CD8-positive, alpha-beta T cell (primary cell): ENCODE measurements at regions of chr17 and their contacts with region 1.

Region 1: GRCh38 chr17:43483674-43484372 is at the start of gene DHX8:
- DNase-seq: peak; percentile 97 to 100 (median 99)
- ATAC-seq: peak; percentile 98
- H3K4me3 ChIP-seq: peak within 1 kb of the TSS; percentile 94 to 99
- H3K4me3 Mint-ChIP-seq: peak within 1 kb of the TSS; percentile 100
- H3K27ac ChIP-seq: peak within 1 kb of the TSS; percentile 87 to 91
- H3K27ac Mint-ChIP-seq: peak within 1 kb of the TSS; percentile 99
- H3K4me1 ChIP-seq: peaks cover 27% of the 10 kb centered on the region
- H3K4me1 Mint-ChIP-seq: peaks cover 37% of the 10 kb centered on the region
- H3K27me3 ChIP-seq: no peaks in the 10 kb centered on the region
- H3K27me3 Mint-ChIP-seq: no peaks in the 10 kb centered on the region
- CTCF ChIP-seq: peak; percentile 100
- total RNA-seq, gene DHX8: 125 to 130 TPM

Region 2: GRCh38 chr17:42819944-42820535 is 663.8 kb before region 1 on chr17:
- CTCF ChIA-PET with region 1: no interaction called
- POLR2A ChIA-PET with region 1: no interaction called
- intact Hi-C with region 1: loop called in 1 of 2 experiments (anchors 1 kb)
- DNase-seq: peak; percentile 26 to 74 (median 63)
- ATAC-seq: peak; percentile 24
- H3K4me3 ChIP-seq: no peak overlapping the region
- H3K4me3 Mint-ChIP-seq: no peak overlapping the region
- H3K27ac ChIP-seq: no peak overlapping the region
- H3K27ac Mint-ChIP-seq: no peak overlapping the region
- H3K4me1 ChIP-seq: peaks cover 13% of the 10 kb centered on the region
- H3K4me1 Mint-ChIP-seq: peaks cover 34% of the 10 kb centered on the region
- H3K27me3 ChIP-seq: no peaks in the 10 kb centered on the region
- H3K27me3 Mint-ChIP-seq: no peaks in the 10 kb centered on the region
- CTCF ChIP-seq: peak; percentile 73

Region 3: GRCh38 chr17:43211480-43212402 is 272.1 kb before region 1 on chr17 and contains the start of gene TMEM106A:
- CTCF ChIA-PET with region 1: no interaction called
- POLR2A ChIA-PET with region 1: interaction called, 6 read pairs
- intact Hi-C with region 1: loop called (anchors 1 to 10 kb)
- DNase-seq: peak; percentile 50 to 89 (median 76)
- ATAC-seq: peak; percentile 92
- H3K4me3 ChIP-seq: peak within 1 kb of the TSS; percentile 82 to 95
- H3K4me3 Mint-ChIP-seq: peak within 1 kb of the TSS; percentile 98
- H3K27ac ChIP-seq: peak within 1 kb of the TSS; percentile 75 to 82
- H3K27ac Mint-ChIP-seq: peak within 1 kb of the TSS; percentile 96
- H3K4me1 ChIP-seq: peaks cover 25% of the 10 kb centered on the region
- H3K4me1 Mint-ChIP-seq: peaks cover 40% of the 10 kb centered on the region
- H3K27me3 ChIP-seq: no peaks in the 10 kb centered on the region
- H3K27me3 Mint-ChIP-seq: no peaks in the 10 kb centered on the region
- CTCF ChIP-seq: peak; percentile 58
- total RNA-seq, gene TMEM106A: 8.9 to 9.2 TPM

Region 4: GRCh38 chr17:43360739-43361505 is 122.9 kb before region 1 on chr17:
- CTCF ChIA-PET with region 1: interaction called, 7 read pairs
- POLR2A ChIA-PET with region 1: interaction called, 59 read pairs
- intact Hi-C with region 1: no loop called
- DNase-seq: peak; percentile 80 to 98 (median 94)
- ATAC-seq: peak; percentile 76
- H3K4me3 ChIP-seq: peak overlapping the region; percentile 60 to 64
- H3K4me3 Mint-ChIP-seq: peak overlapping the region; percentile 86
- H3K27ac ChIP-seq: peak overlapping the region; percentile 92 to 100
- H3K27ac Mint-ChIP-seq: peak overlapping the region; percentile 100
- H3K4me1 ChIP-seq: peaks cover 13% of the 10 kb centered on the region
- H3K4me1 Mint-ChIP-seq: peaks cover 35% of the 10 kb centered on the region
- H3K27me3 ChIP-seq: no peaks in the 10 kb centered on the region
- H3K27me3 Mint-ChIP-seq: no peaks in the 10 kb centered on the region
- CTCF ChIP-seq: no peak

Region 5: GRCh38 chr17:43388359-43389045 is 95.3 kb before region 1 on chr17:
- CTCF ChIA-PET with region 1: interaction called, 156 read pairs
- POLR2A ChIA-PET with region 1: interaction called, 37 read pairs
- intact Hi-C with region 1: loop called in 1 of 2 experiments (anchors 1 kb)
- DNase-seq: peak; percentile 88 to 96 (median 90)
- ATAC-seq: peak; percentile 71
- H3K4me3 ChIP-seq: peak overlapping the region; percentile 74 to 94
- H3K4me3 Mint-ChIP-seq: peak overlapping the region; percentile 89
- H3K27ac ChIP-seq: peak overlapping the region; percentile 94 to 96
- H3K27ac Mint-ChIP-seq: peak overlapping the region; percentile 97
- H3K4me1 ChIP-seq: peaks cover 14% of the 10 kb centered on the region
- H3K4me1 Mint-ChIP-seq: peaks cover 37% of the 10 kb centered on the region
- H3K27me3 ChIP-seq: no peaks in the 10 kb centered on the region
- H3K27me3 Mint-ChIP-seq: no peaks in the 10 kb centered on the region
- CTCF ChIP-seq: no peak

Region 6: DNA sequence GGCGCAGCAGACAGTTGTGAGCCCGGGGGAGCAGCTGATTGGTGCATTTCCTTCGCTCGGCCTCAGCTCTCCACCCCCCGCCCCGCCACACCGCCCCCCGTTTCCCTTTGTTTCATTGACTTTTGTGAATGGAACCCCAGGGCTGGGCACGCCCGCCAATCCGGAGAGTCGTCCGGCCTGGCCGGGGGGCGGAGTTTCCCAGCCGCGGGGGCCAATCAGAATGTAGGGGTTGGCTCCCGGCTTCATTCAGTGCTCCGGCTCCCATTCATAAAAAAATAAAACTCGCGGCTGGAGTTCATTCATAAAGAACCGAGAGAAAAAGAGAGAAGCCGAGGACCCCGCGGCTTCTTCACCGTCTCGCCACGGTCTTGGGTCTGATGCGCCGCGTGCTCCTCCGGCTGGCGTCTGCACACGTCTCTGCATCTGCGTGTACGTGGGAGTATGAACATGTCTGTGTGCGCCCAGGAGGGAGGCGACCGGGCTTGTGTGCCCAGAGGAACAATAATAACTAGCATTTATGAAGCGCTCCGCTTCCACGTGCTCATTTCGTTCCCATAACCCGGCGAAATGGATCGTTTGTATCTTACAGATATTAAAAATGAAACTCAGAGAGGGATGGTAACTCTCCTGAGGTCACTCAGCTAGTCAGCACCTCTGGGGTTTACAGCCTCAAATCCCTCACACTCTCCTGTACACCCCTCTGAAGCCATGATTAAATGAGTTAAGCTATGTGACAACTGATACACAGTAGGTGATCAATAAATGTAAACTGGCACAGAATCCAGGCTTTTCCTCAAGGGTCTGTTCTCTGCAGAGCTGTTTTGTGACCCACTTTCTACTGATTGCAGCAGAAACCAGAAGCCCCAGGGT is 62.7 kb after region 1 on chr17 and contains the start of gene ETV4:
- CTCF ChIA-PET with region 1: no interaction called
- POLR2A ChIA-PET with region 1: interaction called, 3 read pairs
- intact Hi-C with region 1: loop called in 1 of 2 experiments (anchors 1 kb)
- DNase-seq: peak; percentile 75 to 92 (median 89)
- ATAC-seq: peak; percentile 90
- H3K4me3 ChIP-seq: peak within 1 kb of the TSS; percentile 52 to 56
- H3K4me3 Mint-ChIP-seq: peak within 1 kb of the TSS; percentile 81
- H3K27ac ChIP-seq: no peak within 1 kb of the TSS
- H3K27ac Mint-ChIP-seq: no peak within 1 kb of the TSS
- H3K4me1 ChIP-seq: peaks cover 17% of the 10 kb centered on the region
- H3K4me1 Mint-ChIP-seq: peaks cover 25% of the 10 kb centered on the region
- H3K27me3 ChIP-seq: peaks cover 35 to 39% of the 10 kb centered on the region in 2 experiments
- H3K27me3 Mint-ChIP-seq: peaks cover 58% of the 10 kb centered on the region
- CTCF ChIP-seq: no peak
- total RNA-seq, gene ETV4: not detected

Region 7: GRCh38 chr17:44070455-44071197 is 586.8 kb after region 1 on chr17 and contains the start of gene G6PC3:
- CTCF ChIA-PET with region 1: no interaction called
- POLR2A ChIA-PET with region 1: no interaction called
- intact Hi-C with region 1: loop called in 1 of 2 experiments (anchors 2 kb)
- DNase-seq: peak; percentile 30 to 88 (median 75)
- ATAC-seq: peak; percentile 55
- H3K4me3 ChIP-seq: peak within 1 kb of the TSS; percentile 70 to 84
- H3K4me3 Mint-ChIP-seq: peak within 1 kb of the TSS; percentile 96
- H3K27ac ChIP-seq: peak within 1 kb of the TSS; percentile 62 to 80
- H3K27ac Mint-ChIP-seq: peak within 1 kb of the TSS; percentile 94
- H3K4me1 ChIP-seq: peaks cover 23% of the 10 kb centered on the region
- H3K4me1 Mint-ChIP-seq: peaks cover 34% of the 10 kb centered on the region
- H3K27me3 ChIP-seq: no peaks in the 10 kb centered on the region
- H3K27me3 Mint-ChIP-seq: no peaks in the 10 kb centered on the region
- CTCF ChIP-seq: no peak
- total RNA-seq, gene G6PC3: 4.8 to 5.9 TPM